Calu3 (cell line): ENCODE measurements at regions of chr17 and their contacts with region 1.

Region 1: DNA sequence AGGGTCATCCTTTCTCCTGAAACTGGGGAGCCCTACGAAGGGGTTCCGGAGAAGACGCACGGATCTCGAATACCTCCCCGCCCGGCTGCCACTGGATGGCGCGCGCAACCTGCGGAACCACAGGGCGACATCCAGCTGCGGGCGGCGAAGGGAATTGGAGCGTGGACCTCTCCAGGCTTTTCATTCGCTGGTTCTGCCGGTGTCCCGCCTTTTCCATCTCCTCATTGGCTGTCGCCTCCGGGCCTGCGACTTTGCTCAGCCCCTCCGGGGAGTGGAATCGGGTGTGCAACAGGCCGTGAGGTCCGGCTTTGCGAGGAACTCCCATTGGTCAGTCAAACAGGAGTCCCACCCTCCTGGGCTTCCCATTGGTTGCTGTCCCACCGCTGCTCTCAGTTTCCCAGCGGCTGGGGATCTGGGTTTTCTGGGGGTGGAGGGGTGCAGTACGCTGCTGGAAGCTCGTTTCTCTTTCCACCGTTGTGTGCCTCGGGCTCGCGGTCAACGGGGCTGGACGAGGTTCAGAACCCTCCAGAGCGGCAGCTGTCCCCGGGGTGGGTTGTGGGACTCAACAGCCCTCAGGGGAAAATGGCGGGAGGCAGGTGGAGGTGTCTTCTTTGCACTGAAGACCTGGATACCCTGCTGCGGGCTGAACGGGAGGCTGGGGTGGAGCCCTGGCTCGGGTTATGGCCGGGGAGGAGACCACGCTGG is 14.5 kb downstream of the OR1D5 start:
- DNase-seq: peak; percentile 95
- H3K4me3 Mint-ChIP-seq: peak overlapping the region; percentile 92
- H3K27ac Mint-ChIP-seq: peak overlapping the region; percentile 64
- H3K4me1 Mint-ChIP-seq: no peaks in the 10 kb centered on the region
- H3K27me3 Mint-ChIP-seq: no peaks in the 10 kb centered on the region
- CTCF ChIP-seq: peak; percentile 41

Region 2: DNA sequence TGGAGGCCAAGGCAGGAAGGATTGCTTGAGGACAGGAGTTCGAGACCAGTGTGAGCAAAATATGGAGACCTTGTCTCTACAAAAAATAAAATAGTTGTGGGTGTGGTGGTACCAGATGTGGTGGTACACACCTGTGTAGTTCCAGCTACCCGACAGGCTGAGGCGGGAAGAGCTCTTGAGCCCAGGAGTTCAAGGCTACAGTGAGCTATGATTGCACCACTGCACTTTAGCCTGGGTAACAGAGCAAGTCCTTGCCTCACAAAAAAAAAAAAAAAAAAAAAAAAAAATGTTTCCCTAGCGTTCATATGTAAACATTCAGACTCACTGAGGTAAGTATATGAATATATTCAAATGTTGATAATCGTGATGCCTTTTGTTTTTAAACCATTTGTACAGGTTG is 376.9 kb before region 1 on chr17:
- CTCF ChIA-PET with region 1: no interaction called
- intact Hi-C with region 1: no loop called
- DNase-seq: no peak
- H3K4me3 Mint-ChIP-seq: no peak overlapping the region
- H3K27ac Mint-ChIP-seq: no peak overlapping the region
- H3K4me1 Mint-ChIP-seq: no peaks in the 10 kb centered on the region
- H3K27me3 Mint-ChIP-seq: no peaks in the 10 kb centered on the region
- CTCF ChIP-seq: no peak

Region 3: GRCh38 chr17:3335884-3336283 is 287.0 kb after region 1 on chr17:
- CTCF ChIA-PET with region 1: no interaction called
- intact Hi-C with region 1: loop called (anchors 10 kb)
- DNase-seq: peak; percentile 2
- H3K4me3 Mint-ChIP-seq: no peak overlapping the region
- H3K27ac Mint-ChIP-seq: no peak overlapping the region
- H3K4me1 Mint-ChIP-seq: no peaks in the 10 kb centered on the region
- H3K27me3 Mint-ChIP-seq: peaks cover 47% of the 10 kb centered on the region
- CTCF ChIP-seq: no peak

Region 4: GRCh38 chr17:3512505-3513171 is 463.7 kb after region 1 on chr17:
- CTCF ChIA-PET with region 1: no interaction called
- intact Hi-C with region 1: no loop called
- DNase-seq: no peak
- H3K4me3 Mint-ChIP-seq: no peak overlapping the region
- H3K27ac Mint-ChIP-seq: no peak overlapping the region
- H3K4me1 Mint-ChIP-seq: no peaks in the 10 kb centered on the region
- H3K27me3 Mint-ChIP-seq: no peaks in the 10 kb centered on the region
- CTCF ChIP-seq: no peak

Region 5: DNA sequence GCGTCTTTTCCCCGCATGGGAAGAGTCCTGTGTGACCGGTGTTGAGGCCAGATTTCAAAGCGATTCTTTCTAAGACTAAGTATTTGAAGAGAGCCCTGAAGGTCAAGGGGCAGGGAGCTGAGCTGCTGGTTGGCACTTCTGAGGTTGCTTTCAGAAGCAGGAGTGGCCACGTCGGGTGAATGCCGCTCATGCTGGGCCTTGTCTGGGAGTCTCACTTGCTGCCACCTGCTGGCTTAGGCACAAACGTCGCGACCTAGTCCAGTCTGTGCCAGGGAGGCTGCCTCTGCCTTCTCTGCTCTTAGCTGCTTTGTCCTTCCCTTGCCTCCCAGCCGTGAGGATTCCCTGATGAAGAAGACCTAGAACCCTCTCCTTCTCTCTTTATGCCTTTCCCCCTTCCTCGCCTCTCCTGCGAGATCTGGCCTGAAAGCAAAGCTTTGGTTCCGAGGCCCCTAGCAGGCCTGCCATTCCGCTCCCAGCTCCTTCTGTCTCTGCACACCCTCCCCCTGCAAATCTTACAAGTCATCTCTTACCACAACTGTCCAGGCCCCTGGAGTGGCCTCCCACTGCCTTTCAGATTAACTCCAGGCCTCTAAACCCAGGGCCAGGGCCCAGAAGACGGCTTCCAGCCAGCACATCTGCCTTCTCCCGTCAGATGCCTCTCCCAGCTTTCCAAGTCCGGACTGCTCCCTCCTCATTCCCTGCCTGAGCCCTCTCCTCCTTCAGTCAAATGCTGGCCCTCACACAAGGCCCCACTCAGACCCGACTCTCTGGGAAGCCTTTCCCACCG is 599.0 kb after region 1 on chr17:
- CTCF ChIA-PET with region 1: no interaction called
- intact Hi-C with region 1: loop called (anchors 5 kb)
- DNase-seq: peak; percentile 47
- H3K4me3 Mint-ChIP-seq: no peak overlapping the region
- H3K27ac Mint-ChIP-seq: no peak overlapping the region
- H3K4me1 Mint-ChIP-seq: no peaks in the 10 kb centered on the region
- H3K27me3 Mint-ChIP-seq: no peaks in the 10 kb centered on the region
- CTCF ChIP-seq: peak; percentile 35